CD8-positive, alpha-beta memory T cell (primary cell): ENCODE measurements at regions of chr11 and their contacts with region 1.

Region 1: GRCh38 chr11:48109046-48109666 is 107.5 kb upstream of the OR4B1 start:
- DNase-seq: peak in 2 of 5 donors; percentile 23 to 24
- H3K4me3 ChIP-seq: peak overlapping the region; percentile 46
- H3K4me3 Mint-ChIP-seq: peak overlapping the region; percentile 40 to 89 (median 78)
- H3K27ac ChIP-seq: no peak overlapping the region
- H3K27ac Mint-ChIP-seq: peak overlapping the region; percentile 67 to 95 (median 91)
- H3K4me1 ChIP-seq: peaks cover 37% of the 10 kb centered on the region
- H3K4me1 Mint-ChIP-seq: peaks cover 46 to 56% (median 50%) of the 10 kb centered on the region in 3 donors
- H3K27me3 ChIP-seq: no peaks in the 10 kb centered on the region
- H3K27me3 Mint-ChIP-seq: no peaks in the 10 kb centered on the region

Region 2: DNA sequence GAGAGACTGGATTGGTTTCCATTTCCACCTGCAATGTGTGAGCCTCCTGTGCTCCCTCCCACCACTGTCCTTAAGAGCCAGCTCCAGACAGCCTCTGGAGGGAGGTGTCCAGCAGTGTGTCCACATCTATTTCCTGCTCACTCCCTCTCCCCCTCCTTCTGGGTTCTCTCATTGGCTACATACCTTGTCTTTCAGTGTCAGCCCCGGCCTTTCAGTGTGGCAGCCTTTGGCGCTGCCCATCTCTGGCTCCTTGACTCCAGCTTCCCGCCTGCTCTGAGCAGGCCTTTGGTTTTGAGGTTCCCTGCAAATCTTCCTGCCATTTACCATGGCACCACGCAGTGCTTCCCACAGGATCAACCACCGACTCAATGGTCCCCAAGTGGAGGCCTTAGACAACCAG is 147.8 kb before region 1 on chr11:
- CTCF ChIA-PET with region 1: interaction called, 10 read pairs
- POLR2A ChIA-PET with region 1: no interaction called
- DNase-seq: no peak
- H3K4me3 ChIP-seq: no peak overlapping the region
- H3K4me3 Mint-ChIP-seq: no peak overlapping the region
- H3K27ac ChIP-seq: no peak overlapping the region
- H3K27ac Mint-ChIP-seq: no peak overlapping the region
- H3K4me1 ChIP-seq: no peaks in the 10 kb centered on the region
- H3K4me1 Mint-ChIP-seq: no peaks in the 10 kb centered on the region
- H3K27me3 ChIP-seq: no peaks in the 10 kb centered on the region
- H3K27me3 Mint-ChIP-seq: peaks cover 0 to 2% of the 10 kb centered on the region in 2 donors

Region 3: DNA sequence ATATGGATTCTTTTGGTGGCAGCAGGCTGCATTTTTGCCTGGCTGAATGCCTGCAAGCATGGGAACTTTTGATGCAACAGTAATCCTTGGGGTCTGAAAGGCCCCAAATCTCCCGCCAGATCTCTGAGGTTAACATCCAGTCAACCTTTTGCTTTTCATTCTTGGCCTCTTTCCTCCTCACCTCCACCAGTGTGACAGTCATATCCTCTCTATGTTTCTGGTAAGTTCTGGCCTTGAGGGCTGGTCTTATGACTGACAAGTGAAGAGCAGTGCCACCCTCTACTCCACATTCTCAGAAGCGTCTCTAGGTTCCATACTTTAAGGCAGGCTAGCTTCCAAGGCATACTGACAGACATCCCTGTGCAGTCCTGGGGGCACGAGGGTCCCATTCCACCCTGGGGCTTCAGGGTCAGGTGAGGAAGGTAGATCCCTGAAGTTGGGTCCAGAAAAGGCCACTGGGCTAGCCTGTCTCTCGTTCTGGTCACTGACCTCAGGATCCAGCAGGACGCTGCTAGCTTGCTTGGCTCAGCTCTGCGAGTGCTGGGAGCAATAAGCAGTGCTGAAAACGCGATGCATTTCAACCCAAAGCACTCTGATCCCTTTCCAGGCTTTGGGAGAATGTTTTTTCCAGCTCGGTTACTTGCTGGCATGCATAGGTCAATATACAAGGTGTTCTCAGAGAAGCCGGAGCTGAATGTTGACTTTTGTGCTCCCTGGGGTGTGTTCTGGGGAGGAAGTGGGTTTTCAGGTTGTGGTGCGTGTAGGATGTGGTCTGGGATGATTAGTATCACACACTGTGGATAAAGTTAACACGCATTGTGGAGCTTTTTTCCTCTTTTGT is 53.6 kb before region 1 on chr11:
- CTCF ChIA-PET with region 1: interaction called, 22 read pairs
- POLR2A ChIA-PET with region 1: no interaction called
- DNase-seq: peak; percentile 16 to 77 (median 67)
- H3K4me3 ChIP-seq: peak overlapping the region; percentile 42
- H3K4me3 Mint-ChIP-seq: peak overlapping the region; percentile 29 to 89 (median 72)
- H3K27ac ChIP-seq: peak overlapping the region; percentile 54
- H3K27ac Mint-ChIP-seq: peak overlapping the region; percentile 61 to 94 (median 80)
- H3K4me1 ChIP-seq: peaks cover 87% of the 10 kb centered on the region
- H3K4me1 Mint-ChIP-seq: peaks cover 71 to 89% (median 89%) of the 10 kb centered on the region in 3 donors
- H3K27me3 ChIP-seq: no peaks in the 10 kb centered on the region
- H3K27me3 Mint-ChIP-seq: no peaks in the 10 kb centered on the region

Region 4: GRCh38 chr11:48167380-48167779 is 58.2 kb after region 1 on chr11:
- CTCF ChIA-PET with region 1: no interaction called
- POLR2A ChIA-PET with region 1: no interaction called
- DNase-seq: no peak
- H3K4me3 ChIP-seq: no peak overlapping the region
- H3K4me3 Mint-ChIP-seq: no peak overlapping the region
- H3K27ac ChIP-seq: no peak overlapping the region
- H3K27ac Mint-ChIP-seq: peak overlapping the region in 1 of 8 donors; percentile 48
- H3K4me1 ChIP-seq: no peaks in the 10 kb centered on the region
- H3K4me1 Mint-ChIP-seq: peaks cover 17 to 27% (median 22%) of the 10 kb centered on the region in 3 donors
- H3K27me3 ChIP-seq: no peaks in the 10 kb centered on the region
- H3K27me3 Mint-ChIP-seq: no peaks in the 10 kb centered on the region